Left ventricle myocardium inferior (tissue), 1 donor: ENCODE measurements at regions of chr1 and their contacts with region 1.

Region 1: GRCh38 chr1:220680085-220680687 is 10.0 kb upstream of the C1orf115 start:
- DNase-seq: no peak
- H3K4me3 ChIP-seq: no peak overlapping the region
- H3K27ac ChIP-seq: no peak overlapping the region
- H3K4me1 ChIP-seq: peaks cover 9% of the 10 kb centered on the region
- H3K27me3 ChIP-seq: no peaks in the 10 kb centered on the region
- CTCF ChIP-seq: peak; percentile 88

Region 2: GRCh38 chr1:220733090-220733601 is 53.0 kb after region 1 on chr1:
- intact Hi-C with region 1: loop called (anchors 10 kb)
- DNase-seq: peak; percentile 62
- H3K4me3 ChIP-seq: peak overlapping the region; percentile 50
- H3K27ac ChIP-seq: peak overlapping the region; percentile 89
- H3K4me1 ChIP-seq: peaks cover 21% of the 10 kb centered on the region
- H3K27me3 ChIP-seq: no peaks in the 10 kb centered on the region
- CTCF ChIP-seq: peak; percentile 91

Region 3: DNA sequence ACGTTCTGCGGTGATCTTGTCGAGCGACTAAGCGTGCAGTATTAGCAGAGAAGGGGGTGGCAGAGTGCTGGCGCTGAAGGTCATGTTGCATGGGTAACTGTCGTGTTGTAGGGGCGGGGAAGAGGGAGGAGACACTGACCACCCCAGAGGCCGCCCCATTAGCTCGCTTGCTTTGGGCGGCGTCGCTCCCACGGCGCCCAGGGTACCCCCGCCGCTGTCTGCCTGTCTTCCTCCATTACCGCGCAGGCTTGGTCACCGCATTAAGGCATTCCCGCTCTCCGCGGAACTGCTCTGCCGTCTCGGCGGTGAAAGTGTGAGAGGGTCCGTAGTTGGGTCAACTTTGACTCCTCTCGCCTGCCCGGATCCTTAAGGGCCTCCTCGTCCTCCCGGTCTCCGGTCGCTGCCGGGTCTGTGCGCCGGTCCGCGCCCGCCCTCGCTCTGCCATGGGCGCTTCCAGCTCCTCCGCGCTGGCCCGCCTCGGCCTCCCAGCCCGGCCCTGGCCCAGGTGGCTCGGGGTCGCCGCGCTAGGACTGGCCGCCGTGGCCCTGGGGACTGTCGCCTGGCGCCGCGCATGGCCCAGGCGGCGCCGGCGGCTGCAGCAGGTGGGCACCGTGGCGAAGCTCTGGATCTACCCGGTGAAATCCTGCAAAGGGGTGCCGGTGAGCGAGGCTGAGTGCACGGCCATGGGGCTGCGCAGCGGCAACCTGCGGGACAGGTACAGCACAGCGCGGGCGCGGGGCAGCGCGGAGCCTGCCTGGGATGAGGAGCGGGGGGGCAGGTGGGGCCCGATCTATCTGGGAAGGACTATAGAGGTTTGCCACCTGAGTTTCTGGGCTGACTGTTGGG is 68.1 kb after region 1 on chr1 and contains the start of gene MTARC2:
- intact Hi-C with region 1: no loop called
- DNase-seq: peak; percentile 86
- H3K4me3 ChIP-seq: peak within 1 kb of the TSS; percentile 87
- H3K27ac ChIP-seq: peak within 1 kb of the TSS; percentile 96
- H3K4me1 ChIP-seq: peaks cover 56% of the 10 kb centered on the region
- H3K27me3 ChIP-seq: no peaks in the 10 kb centered on the region
- CTCF ChIP-seq: no peak
- total RNA-seq, gene MTARC2: 22.6 TPM

Region 4: DNA sequence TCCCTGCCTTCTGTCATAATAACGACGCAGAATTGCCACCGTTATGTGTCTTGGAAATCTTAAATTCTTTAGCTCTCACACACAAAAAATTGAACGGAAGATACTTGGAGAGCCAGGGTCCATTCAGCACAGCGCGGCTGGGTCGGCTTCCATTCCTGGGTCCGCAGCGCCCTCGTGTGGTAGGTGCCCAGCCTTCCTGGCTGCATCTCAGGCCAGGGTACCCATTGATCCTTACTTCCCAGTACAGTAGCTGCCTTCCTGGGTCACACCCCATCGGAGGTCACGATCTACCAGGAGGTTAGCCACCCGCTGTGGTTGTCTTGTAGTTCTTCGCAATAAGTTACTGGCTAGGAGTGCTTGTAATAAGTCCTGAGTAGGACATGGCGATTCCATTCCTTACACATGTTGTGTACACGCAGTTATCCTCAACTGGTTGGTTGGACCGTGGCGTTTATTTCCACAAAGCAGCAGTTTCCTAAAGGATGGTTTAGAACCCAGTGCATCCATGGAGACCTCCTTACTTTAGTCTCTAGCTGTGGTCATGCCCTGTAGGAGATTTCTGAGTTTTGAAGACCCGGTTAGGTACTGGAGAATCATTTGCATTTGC is 96.6 kb after region 1 on chr1:
- intact Hi-C with region 1: loop called (anchors 5 kb)
- DNase-seq: peak; percentile 83
- H3K4me3 ChIP-seq: no peak overlapping the region
- H3K27ac ChIP-seq: no peak overlapping the region
- H3K4me1 ChIP-seq: peaks cover 12% of the 10 kb centered on the region
- H3K27me3 ChIP-seq: no peaks in the 10 kb centered on the region
- CTCF ChIP-seq: peak; percentile 94